Mammary epithelial cell (primary cell): ENCODE measurements at regions of chr5 and their contacts with region 1.

Region 1: DNA sequence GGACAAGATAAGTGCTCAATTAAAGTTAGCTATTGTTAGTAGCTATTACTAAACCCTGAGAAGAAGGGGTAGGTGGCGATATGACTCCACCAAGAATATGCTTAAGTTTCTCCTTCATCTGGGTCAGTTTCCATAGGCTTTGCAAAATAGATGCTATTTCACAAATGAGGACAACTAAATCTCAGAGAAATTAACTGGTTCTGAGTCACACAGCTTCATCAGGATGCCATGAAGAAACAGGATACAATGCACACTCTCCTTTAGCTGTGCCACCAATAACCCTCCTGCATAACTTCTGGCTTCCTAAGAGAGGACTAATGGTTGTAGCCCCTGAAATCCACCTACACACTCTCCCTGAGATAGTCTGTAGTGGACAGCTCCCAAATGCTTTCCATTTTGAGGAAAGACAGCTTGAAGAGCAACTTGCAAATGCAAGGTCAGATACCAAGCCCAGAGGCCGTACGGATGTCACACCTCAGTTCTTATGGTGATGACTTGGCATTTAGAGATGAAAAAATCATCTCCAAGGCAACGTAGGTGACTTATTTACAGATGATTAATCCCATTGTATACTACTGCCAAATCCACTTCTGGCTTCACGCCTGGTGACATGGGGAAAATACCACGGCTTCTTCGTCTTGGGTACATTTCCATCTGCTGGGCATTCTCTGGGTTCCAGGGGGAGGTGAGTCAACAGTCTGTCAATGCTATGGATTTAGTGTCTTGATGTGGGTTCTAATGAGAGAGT is 251.4 kb upstream of the IL12B start:
- DNase-seq: peak; percentile 97
- H3K4me3 ChIP-seq: no peak overlapping the region
- H3K27ac ChIP-seq: peak overlapping the region; percentile 97
- H3K4me1 ChIP-seq: peaks cover 26% of the 10 kb centered on the region
- H3K27me3 ChIP-seq: no peaks in the 10 kb centered on the region
- CTCF ChIP-seq: peak; percentile 28 to 36

Region 2: GRCh38 chr5:159444441-159445082 is 137.1 kb before region 1 on chr5:
- CTCF ChIA-PET with region 1: no interaction called
- dilution Hi-C with region 1: no loop called
- in situ Hi-C with region 1: no loop called
- intact Hi-C with region 1: loop called (anchors 1 kb)
- DNase-seq: peak; percentile 60
- H3K4me3 ChIP-seq: no peak overlapping the region
- H3K27ac ChIP-seq: no peak overlapping the region
- H3K4me1 ChIP-seq: no peaks in the 10 kb centered on the region
- H3K27me3 ChIP-seq: no peaks in the 10 kb centered on the region
- CTCF ChIP-seq: peak; percentile 30 to 54

Region 3: DNA sequence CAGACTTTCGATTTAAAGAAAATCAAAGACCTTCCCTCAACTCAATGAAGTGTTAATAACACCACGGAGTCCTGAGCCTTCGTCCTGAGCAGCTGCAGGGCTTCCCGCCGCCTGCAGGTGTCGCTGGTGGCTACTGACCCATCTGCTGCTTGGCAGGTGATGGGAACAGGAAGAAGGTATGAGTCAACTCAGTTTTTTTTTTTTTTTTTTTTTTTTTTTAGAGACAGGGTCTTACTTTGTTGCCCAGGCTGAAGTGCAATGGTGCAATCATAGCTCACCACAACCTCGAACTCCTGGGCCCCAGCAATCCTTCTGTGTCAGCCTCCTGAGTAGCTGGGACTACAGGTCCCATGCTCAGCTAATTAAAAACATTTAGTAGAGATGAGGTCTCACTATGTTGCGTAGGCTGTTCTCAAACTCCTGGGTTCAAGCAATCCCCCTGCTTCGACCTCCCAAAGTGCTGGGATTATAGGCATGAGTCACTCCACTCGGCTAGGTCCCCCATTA is 65.7 kb before region 1 on chr5:
- CTCF ChIA-PET with region 1: no interaction called
- dilution Hi-C with region 1: no loop called
- in situ Hi-C with region 1: no loop called
- intact Hi-C with region 1: loop called (anchors 5 kb)
- DNase-seq: peak; percentile 54
- H3K4me3 ChIP-seq: no peak overlapping the region
- H3K27ac ChIP-seq: no peak overlapping the region
- H3K4me1 ChIP-seq: peaks cover 14% of the 10 kb centered on the region
- H3K27me3 ChIP-seq: no peaks in the 10 kb centered on the region
- CTCF ChIP-seq: peak; percentile 95 to 98

Region 4: DNA sequence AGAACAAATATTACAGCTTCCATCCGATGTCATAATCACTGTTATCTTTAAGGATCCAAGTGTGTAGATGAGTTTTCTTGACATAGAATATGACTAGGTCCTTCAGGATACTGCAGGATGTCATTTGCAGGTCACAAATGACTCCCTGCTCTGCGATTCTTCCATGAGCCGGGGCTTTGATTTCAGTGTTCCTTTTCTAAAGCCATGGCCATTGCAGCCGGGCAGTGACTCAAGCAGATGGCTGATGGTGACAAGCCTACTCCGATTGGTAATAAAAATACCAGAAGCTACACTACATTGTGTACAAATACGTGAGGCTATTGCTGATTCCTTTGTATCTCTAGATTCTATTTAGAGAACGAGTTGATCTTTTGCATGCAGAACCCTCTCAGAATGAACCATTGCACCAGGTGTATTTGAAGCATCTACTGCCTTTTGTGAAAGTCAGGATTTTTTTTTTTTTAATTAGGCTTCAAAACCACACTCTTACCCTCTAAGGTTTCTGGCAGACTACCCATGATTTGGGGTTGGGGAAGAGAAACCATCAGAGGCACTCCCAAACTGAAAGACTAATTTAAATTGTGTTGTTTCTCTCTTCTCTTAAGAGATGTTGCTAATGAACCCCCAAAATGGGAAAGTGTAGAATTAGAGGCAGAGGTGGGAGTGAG is 63.6 kb after region 1 on chr5:
- CTCF ChIA-PET with region 1: no interaction called
- dilution Hi-C with region 1: no loop called
- in situ Hi-C with region 1: no loop called
- intact Hi-C with region 1: no loop called
- DNase-seq: no peak
- H3K4me3 ChIP-seq: no peak overlapping the region
- H3K27ac ChIP-seq: no peak overlapping the region
- H3K4me1 ChIP-seq: no peaks in the 10 kb centered on the region
- H3K27me3 ChIP-seq: no peaks in the 10 kb centered on the region
- CTCF ChIP-seq: no peak

Region 5: DNA sequence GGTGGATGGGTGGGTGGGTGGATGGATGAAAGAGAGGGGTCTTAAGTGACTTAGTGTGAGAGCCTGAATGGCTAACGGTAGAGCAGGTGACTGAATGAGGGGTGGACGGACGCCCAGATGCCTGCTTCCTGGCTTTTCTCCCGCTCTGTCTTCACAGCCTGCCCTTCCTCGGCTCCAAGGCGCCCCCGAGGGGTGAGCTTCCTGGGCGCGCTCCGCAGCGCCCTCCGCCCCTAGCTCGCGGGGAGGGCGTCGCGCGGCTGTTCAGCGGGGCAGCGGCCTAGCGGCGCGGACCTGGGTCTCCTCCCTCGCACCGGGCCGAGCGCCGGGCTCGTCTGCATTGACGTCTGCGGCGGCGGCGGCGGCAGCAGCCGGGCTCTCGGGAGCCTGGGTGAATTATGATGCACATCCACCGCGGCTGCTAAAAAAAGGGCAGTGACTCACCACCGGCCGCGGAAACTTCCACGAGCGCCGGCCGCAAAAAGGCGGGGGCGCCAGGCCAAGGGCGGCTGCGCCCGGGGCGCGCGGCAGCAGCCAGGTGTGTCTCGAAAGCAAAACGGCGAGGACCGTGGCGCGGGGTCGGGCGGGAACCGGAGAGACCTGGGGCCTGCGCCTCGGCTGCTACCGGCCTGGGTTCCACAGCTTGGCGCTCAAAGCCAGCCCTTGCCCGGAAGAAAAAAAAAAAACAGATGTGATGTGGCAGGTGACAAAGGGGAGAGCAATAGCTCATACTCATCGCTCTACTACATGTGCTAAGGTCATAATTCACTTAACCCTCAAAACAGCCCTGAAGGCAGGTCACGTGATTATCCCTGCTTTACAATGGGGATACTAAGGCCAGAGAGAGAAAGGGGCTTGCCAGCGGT is 191.6 kb after region 1 on chr5:
- CTCF ChIA-PET with region 1: no interaction called
- dilution Hi-C with region 1: no loop called
- in situ Hi-C with region 1: no loop called
- intact Hi-C with region 1: loop called (anchors 2 kb)
- DNase-seq: peak; percentile 90
- H3K4me3 ChIP-seq: peak overlapping the region; percentile 16 to 45 (median 35)
- H3K27ac ChIP-seq: peak overlapping the region; percentile 41
- H3K4me1 ChIP-seq: peaks cover 10% of the 10 kb centered on the region
- H3K27me3 ChIP-seq: no peaks in the 10 kb centered on the region
- CTCF ChIP-seq: peak in 1 of 2 donors; percentile 11

Region 6: GRCh38 chr5:159797261-159797970 is 215.7 kb after region 1 on chr5:
- CTCF ChIA-PET with region 1: no interaction called
- dilution Hi-C with region 1: no loop called
- in situ Hi-C with region 1: no loop called
- intact Hi-C with region 1: no loop called
- DNase-seq: no peak
- H3K4me3 ChIP-seq: no peak overlapping the region
- H3K27ac ChIP-seq: no peak overlapping the region
- H3K4me1 ChIP-seq: peaks cover 7% of the 10 kb centered on the region
- H3K27me3 ChIP-seq: no peaks in the 10 kb centered on the region
- CTCF ChIP-seq: no peak

Region 7: DNA sequence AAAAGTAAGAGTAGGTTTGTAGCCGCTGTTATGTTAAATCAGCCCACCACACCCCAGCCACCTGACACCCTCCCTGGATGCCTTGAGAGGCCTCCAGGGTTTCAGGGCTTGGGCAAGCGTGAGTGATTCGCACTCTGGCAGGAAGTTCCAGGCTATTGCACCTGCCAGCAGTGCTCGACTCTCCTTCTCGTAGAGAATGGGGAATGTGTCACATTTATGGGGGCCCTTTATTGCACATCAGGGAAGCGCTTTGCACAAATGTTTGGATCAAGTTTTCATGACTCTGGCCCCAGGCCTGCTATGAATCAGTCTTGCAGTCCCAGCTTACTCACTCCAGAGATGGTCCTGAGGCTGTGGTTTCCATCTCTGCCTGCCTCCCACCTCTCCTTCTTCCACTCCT is 268.5 kb after region 1 on chr5:
- CTCF ChIA-PET with region 1: no interaction called
- dilution Hi-C with region 1: no loop called
- in situ Hi-C with region 1: no loop called
- intact Hi-C with region 1: loop called (anchors 2 kb)
- DNase-seq: peak; percentile 90
- H3K4me3 ChIP-seq: no peak overlapping the region
- H3K27ac ChIP-seq: peak overlapping the region; percentile 49
- H3K4me1 ChIP-seq: peaks cover 25% of the 10 kb centered on the region
- H3K27me3 ChIP-seq: no peaks in the 10 kb centered on the region
- CTCF ChIP-seq: no peak